ENCODE measurements at regions of chr19 and their contacts with region 1.

Region 1: DNA sequence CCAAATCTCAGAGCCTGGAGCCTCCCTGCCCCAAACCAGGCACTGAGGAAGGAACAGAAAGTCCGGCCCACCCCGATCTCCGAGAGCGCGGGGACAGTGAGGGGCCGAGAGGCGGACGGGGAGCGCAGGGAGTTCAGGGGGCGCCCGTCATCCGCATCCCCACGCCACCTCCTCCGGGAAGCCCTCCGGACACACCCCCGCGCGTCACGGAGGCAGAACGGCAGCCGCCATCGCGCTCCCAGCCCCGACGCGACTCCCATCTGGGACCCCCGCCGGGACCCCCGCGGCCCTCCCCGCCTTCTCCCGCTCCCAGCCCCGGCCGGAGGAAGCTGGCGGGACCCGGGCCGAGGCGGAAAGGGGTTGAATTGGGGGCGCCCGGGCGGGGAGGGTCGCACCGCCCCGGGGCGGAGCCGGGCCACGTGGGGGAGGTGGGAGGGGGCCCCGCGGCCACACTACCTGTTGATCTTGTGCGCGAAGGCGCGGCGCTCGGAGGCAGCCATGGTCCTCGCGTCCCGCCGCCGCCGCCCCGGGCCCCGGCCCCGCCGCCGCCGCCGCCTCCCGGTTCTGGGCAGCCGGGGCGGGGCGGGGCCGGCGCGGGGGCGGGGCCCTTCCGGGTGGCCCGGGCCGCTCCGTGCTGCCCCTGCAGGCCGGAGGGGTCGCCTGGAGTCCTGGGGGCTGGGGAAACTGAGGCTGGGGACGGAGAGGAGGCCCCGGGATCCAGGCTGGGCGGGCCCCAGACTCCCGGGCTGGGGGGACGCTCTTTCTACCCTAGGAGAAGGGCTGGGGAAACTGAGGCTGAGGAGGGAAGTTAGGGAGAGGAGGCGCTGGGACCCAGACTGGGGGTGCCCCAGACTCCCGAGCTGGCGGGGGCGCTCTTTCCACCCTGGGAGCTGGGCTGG is at the start of gene DOCK6:
- DNase-seq: peak; percentile 32
- H3K4me3 Mint-ChIP-seq: peak within 1 kb of the TSS; percentile 67
- H3K27ac Mint-ChIP-seq: no peak within 1 kb of the TSS
- H3K4me1 Mint-ChIP-seq: no peaks in the 10 kb centered on the region
- H3K27me3 Mint-ChIP-seq: peaks cover 40% of the 10 kb centered on the region
- total RNA-seq, gene DOCK6: 5.8 to 5.9 TPM

Region 2: DNA sequence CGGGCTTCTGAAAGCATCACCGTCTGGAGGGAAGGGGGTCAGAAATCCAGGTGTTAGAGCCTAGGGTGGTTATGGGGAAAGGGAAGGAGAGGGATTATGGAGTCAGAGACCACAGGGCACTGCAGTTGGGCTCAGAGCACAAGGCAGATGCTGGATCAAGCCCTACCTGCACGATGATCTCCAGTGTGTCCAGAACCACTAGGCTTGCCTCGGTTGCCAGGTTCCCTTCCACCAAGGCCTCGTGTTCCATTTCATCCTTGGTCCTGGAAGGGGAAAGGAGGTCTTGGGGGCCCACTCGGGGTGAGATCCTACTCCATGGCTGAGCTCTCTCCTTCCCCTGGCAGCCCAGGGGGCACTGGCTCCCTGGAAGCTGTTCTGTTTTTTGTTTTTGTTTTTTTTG is 47.8 kb before region 1 on chr19:
- CTCF ChIA-PET with region 1: no interaction called
- POLR2A ChIA-PET with region 1: no interaction called
- intact Hi-C with region 1: no loop called
- DNase-seq: no peak
- H3K4me3 Mint-ChIP-seq: no peak overlapping the region
- H3K27ac Mint-ChIP-seq: no peak overlapping the region
- H3K4me1 Mint-ChIP-seq: no peaks in the 10 kb centered on the region
- H3K27me3 Mint-ChIP-seq: peaks cover 4% of the 10 kb centered on the region

Region 3: DNA sequence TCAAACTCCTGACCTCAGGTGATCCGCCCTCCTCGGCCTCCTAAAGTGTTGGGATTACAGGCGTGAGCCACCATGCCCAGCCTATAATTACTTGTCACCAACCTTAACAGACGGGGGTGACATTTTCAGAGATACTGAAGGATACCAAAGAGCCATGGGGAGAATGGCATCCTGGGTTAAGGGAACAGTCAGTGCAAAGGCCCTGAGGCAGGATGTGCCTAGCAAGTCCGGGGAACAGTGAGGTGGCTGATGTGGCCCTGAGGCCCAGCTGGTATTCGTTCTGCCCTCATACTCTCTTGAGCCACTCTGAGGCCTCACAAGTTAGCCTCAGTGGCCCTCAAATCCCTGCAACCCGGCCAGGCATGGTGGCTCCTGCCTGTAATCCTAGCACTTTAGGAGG is 37.8 kb before region 1 on chr19:
- CTCF ChIA-PET with region 1: no interaction called
- POLR2A ChIA-PET with region 1: no interaction called
- intact Hi-C with region 1: no loop called
- DNase-seq: no peak
- H3K4me3 Mint-ChIP-seq: no peak overlapping the region
- H3K27ac Mint-ChIP-seq: no peak overlapping the region
- H3K4me1 Mint-ChIP-seq: no peaks in the 10 kb centered on the region
- H3K27me3 Mint-ChIP-seq: peaks cover 1% of the 10 kb centered on the region

Region 4: DNA sequence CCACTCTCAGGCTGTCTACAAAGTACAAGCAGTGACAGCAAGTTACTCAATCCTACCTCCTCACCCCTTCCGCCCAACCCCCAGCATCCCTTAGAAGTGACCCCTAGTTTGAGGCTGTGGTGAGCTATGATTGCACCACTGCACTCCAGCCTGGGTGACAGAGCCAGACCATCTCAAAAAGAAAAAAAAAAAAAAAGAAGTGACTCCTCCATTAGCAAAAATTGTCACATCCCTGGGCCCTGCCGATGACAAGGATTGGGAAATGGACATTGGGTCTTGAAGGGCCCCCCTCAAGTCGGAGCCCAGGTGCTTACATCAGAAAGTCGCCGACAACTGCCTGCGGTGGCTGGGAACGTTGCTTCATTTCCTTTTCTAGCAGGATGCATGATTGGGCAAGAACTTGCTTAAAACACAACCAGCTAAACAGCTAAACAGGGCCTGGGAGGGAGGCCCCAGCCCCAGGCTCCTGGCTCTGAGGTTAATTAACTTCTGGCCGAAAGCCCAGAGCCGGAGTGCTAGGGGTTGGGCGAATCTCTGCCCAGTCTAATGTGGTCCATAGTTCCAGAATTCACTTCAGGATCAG is 62.0 kb after region 1 on chr19:
- CTCF ChIA-PET with region 1: no interaction called
- POLR2A ChIA-PET with region 1: no interaction called
- intact Hi-C with region 1: loop called (anchors 10 kb)
- DNase-seq: peak; percentile 73
- H3K4me3 Mint-ChIP-seq: peak overlapping the region; percentile 54
- H3K27ac Mint-ChIP-seq: peak overlapping the region; percentile 86
- H3K4me1 Mint-ChIP-seq: peaks cover 13% of the 10 kb centered on the region
- H3K27me3 Mint-ChIP-seq: no peaks in the 10 kb centered on the region

Measured in activated CD4-positive, alpha-beta memory T cell treated with anti-CD3 and anti-CD28 coated beads for 36 hours (primary cell).